Activated T-helper 1 cell treated with anti-CD3 and anti-CD28 coated beads, Interleukin-12 subunit alpha, Interleukin-12 subunit beta, Interleukin-2, Interleukin-4 antibody, amounts not matched to agents 30 ng/mL and 10 ng/mL and 1 ng/mL, durations not matched to agents 14 hours and 24 hours and 36 hours (primary cell): ENCODE measurements at regions of chr17 and their contacts with region 1.

Region 1: GRCh38 chr17:47066841-47067682 is 88.0 kb upstream of the RPRML start:
- DNase-seq: peak; percentile 63
- H3K4me3 Mint-ChIP-seq: peak overlapping the region; percentile 94
- H3K27ac Mint-ChIP-seq: peak overlapping the region; percentile 93
- H3K4me1 Mint-ChIP-seq: peaks cover 34% of the 10 kb centered on the region
- H3K27me3 Mint-ChIP-seq: no peaks in the 10 kb centered on the region

Region 2: GRCh38 chr17:46995841-46996571 is 71.1 kb before region 1 on chr17:
- intact Hi-C with region 1: loop called (anchors 2 kb)
- DNase-seq: no peak
- H3K4me3 Mint-ChIP-seq: no peak overlapping the region
- H3K27ac Mint-ChIP-seq: no peak overlapping the region
- H3K4me1 Mint-ChIP-seq: no peaks in the 10 kb centered on the region
- H3K27me3 Mint-ChIP-seq: peaks cover 2% of the 10 kb centered on the region

Region 3: GRCh38 chr17:47099987-47100711 is 33.1 kb after region 1 on chr17:
- intact Hi-C with region 1: loop called (anchors 2 kb)
- DNase-seq: peak; percentile 90
- H3K4me3 Mint-ChIP-seq: peak overlapping the region; percentile 100
- H3K27ac Mint-ChIP-seq: peak overlapping the region; percentile 100
- H3K4me1 Mint-ChIP-seq: peaks cover 16% of the 10 kb centered on the region
- H3K27me3 Mint-ChIP-seq: no peaks in the 10 kb centered on the region

Region 4: DNA sequence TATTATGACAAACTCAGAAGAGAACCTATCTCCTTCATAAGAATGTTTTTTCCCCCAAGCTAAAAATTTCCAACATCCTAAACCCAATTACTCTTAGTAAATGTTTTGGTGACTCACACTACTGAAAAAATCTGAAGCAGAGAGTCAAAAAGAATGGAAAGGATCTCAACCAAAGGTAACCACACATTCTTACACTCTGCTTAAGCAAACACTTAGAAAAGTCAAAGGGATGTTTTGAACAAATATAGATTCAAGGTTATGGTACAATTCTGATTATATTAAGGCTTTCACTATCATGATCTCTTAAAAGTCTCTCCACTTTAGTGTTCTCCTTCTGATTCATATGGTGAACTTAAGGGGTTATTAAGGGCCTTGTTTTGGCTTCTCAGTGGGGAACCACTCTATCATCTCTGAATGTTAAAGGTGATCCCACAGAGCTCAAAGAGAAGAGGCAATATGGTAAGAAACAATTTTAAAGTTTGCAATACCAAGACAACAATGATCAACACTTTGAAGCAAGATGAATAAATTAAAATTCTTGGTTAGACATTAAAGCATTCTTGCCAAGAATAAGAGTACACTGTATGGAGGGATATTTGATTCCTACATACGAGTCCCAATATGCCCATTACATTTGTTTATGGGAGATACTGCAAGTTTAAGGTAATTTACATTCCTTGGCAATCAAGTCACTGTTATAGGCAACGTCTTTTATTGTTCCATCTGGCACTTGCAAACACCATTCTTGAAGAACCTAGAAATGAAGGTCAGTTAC is 52.9 kb after region 1 on chr17:
- intact Hi-C with region 1: loop called (anchors 1 kb)
- DNase-seq: no peak
- H3K4me3 Mint-ChIP-seq: no peak overlapping the region
- H3K27ac Mint-ChIP-seq: peak overlapping the region; percentile 80
- H3K4me1 Mint-ChIP-seq: peaks cover 13% of the 10 kb centered on the region
- H3K27me3 Mint-ChIP-seq: no peaks in the 10 kb centered on the region